ENCODE measurements at regions of chrX and their contacts with region 1.

Region 1: DNA sequence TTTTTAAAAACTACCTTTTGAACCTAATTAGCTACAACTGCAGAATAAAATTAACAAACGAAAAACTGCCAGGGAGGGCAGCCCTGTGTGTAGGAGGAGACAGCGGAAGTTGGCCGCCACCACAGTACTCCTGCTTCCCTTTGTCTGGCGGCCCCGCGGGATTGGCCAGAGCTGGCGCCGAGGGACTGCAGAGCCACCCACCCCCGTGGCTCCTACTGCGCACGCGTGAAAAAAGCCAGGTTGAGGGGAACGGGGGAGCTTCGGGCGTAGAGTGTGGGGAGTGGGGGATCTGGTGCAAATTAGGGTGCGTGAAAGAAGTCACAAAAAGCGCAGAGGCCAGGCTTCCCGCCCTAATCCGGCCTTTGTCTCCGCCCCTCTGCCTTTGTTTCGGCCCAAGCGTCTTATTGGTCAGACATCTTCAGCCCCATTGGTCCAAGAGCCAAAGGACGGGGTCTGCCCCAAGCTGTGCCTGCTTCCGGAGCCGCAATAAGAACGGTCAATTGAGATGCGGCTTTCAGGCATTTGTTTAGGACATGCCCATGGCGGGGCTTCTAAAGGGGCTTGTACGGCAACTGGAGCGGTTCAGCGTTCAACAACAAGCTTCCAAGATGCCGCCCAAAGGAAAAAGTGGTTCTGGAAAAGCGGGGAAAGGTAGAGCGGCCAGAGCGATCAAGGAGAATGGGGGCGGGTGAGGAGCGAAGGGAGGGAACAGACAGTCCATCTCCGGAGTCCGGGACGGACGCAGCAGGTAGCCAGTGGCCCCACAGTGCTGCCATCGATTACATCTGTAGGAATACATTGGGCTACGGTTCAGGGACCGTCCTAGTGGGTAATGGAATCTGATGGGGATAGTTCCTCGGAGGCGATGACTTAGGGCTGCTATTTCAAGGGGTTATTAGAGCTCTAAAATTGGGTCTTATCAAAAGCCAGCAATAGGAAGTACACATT is at the start of gene PIN4:
- DNase-seq: peak; percentile 90
- H3K4me3 Mint-ChIP-seq: no peak within 1 kb of the TSS
- H3K27ac Mint-ChIP-seq: peak within 1 kb of the TSS; percentile 60
- H3K4me1 Mint-ChIP-seq: peaks cover 11% of the 10 kb centered on the region
- H3K27me3 Mint-ChIP-seq: no peaks in the 10 kb centered on the region
- total RNA-seq, gene PIN4: 7.5 to 7.8 TPM

Region 2: DNA sequence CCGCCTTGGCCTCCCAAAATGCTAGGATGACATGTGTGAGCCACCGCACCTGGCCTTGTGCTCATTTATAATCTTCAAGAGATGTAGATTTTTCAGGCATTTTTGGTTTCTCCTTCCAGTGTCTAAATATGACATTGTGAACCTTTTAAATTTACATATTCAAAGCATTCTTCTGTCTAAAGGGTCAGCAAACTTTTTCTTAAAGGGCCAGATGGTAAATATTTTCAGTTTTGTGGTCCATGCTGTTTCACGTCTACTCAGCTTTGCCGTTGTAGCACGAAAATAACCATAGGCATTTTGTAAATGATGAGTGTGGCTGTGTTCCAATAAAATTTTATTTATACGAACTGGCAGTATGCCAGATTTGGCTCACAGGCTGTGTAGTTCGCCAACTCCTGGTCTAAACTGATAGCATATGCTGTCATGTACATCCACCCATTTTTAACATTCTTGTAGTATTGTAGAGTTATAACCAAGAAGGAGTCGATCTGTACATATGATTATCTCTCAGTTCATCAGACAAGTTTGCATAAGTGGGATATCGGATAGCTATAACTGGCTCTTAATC is 615.9 kb before region 1 on chrX:
- CTCF ChIA-PET with region 1: no interaction called
- POLR2A ChIA-PET with region 1: no interaction called
- intact Hi-C with region 1: no loop called
- DNase-seq: no peak
- H3K4me3 Mint-ChIP-seq: no peak overlapping the region
- H3K27ac Mint-ChIP-seq: no peak overlapping the region
- H3K4me1 Mint-ChIP-seq: peaks cover 5% of the 10 kb centered on the region
- H3K27me3 Mint-ChIP-seq: no peaks in the 10 kb centered on the region

Region 3: GRCh38 chrX:72169008-72169728 is 12.3 kb before region 1 on chrX:
- CTCF ChIA-PET with region 1: no interaction called
- POLR2A ChIA-PET with region 1: no interaction called
- intact Hi-C with region 1: loop called (anchors 1 kb)
- DNase-seq: peak; percentile 43
- H3K4me3 Mint-ChIP-seq: peak overlapping the region; percentile 74
- H3K27ac Mint-ChIP-seq: peak overlapping the region; percentile 85
- H3K4me1 Mint-ChIP-seq: peaks cover 4% of the 10 kb centered on the region
- H3K27me3 Mint-ChIP-seq: no peaks in the 10 kb centered on the region

Region 4: DNA sequence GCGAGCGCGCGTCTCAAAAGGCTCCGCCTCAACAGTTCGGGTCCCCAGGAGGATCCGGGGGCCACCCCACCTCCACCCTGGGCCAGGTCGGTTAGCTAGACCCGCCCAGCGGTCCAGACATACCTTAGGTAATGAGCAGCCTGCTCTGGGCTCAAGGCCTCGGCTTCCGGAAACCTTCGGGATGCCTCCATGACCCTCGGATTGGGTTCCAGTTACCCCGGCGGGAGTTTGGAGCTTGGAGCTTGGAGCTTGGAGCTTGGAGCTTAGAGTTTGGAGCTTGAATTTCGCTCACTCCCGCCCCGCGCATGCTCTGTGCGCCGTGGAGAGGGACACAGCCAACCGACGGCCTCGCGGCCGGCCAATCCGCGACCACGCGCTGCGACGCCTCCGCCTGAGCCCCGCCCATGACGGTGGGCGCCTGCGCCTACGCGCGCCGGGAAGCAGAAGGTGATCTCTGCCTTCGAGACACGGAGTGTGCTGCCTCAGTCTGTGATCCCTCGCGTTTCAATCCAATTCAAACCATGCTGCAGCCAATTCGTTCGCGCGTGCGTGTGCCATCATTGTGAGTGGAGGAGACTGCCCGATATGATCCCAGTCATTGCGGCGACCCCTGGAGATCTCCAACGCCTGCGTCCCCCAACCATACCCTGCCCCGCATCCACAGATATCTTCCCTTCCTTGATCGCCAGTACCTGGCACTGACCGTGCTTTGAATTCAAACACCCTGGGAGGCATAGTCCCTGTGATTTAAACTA is 57.4 kb after region 1 on chrX and contains the start of gene ERCC6L:
- CTCF ChIA-PET with region 1: no interaction called
- POLR2A ChIA-PET with region 1: no interaction called
- intact Hi-C with region 1: loop called (anchors 2 kb)
- DNase-seq: peak; percentile 90
- H3K4me3 Mint-ChIP-seq: peak within 1 kb of the TSS; percentile 79
- H3K27ac Mint-ChIP-seq: peak within 1 kb of the TSS; percentile 70
- H3K4me1 Mint-ChIP-seq: peaks cover 13% of the 10 kb centered on the region
- H3K27me3 Mint-ChIP-seq: no peaks in the 10 kb centered on the region
- total RNA-seq, gene ERCC6L: 10.5 to 10.8 TPM

Measured in activated CD4-positive, alpha-beta memory T cell treated with anti-CD3 and anti-CD28 coated beads for 36 hours (primary cell).